ENCODE measurements at regions of chr12 and their contacts with region 1.

Region 1: DNA sequence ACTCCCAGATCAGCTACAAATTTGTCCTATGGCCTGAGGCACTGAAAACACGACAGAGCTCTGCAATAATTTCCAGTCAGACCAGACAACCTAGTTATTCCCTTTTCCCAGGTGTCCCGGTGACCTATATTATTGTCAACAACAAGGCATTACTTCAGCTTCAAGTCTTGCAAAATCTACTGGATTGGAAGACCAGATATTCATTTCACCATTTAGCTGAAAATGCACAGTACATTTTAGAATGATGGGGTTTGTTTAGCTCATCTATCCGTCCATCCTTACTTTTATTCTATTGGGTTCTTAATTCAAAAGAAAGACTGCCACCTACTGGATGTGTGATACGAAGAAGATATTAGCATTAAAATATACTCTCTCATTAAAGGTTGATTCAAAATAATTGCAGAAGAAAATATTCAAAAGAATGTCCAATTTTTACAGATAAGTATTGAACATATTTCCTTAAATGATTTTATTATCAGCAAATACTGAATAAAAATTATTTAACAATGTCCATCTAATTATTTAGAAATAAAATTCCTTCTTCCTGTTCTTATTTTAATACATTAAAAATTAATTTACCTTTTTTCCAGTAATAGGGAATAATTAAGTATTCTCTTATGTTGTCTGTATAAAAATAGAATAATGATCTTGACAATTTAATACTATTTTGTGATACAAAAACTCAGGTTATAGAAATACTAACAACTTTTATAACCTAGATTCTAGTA is 244.9 kb upstream of the LRIG3 start:
- DNase-seq: no peak
- ATAC-seq: no peak
- H3K4me3 Mint-ChIP-seq: no peak overlapping the region
- H3K27ac Mint-ChIP-seq: no peak overlapping the region
- H3K4me1 Mint-ChIP-seq: 0 out of 2 replicates have a peak, but pooled peaks cover 2% of the 10 kb centered on the region
- H3K27me3 Mint-ChIP-seq: no peaks in the 10 kb centered on the region
- CTCF ChIP-seq: 0 out of 2 replicates have a peak, but pooled peaks have one; percentile 16

Region 2: DNA sequence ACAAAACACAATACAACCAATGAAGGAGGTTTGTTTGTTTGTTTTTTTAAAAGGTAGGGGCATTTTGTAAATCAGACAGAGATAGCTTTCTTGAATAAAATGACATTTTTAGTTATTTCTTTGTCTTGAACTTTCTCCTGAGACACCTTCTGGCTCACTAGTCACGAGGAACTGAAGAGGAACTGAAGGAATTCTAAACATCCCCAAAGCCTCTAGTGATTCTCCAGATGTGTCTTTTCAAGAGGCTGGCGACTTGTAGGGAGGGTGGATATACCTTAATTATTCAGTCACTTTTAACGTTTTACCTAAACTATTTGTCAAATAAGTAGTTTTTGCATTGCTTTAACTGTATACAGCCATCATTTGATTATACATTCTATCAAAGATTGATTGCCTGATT is 33.7 kb before region 1 on chr12:
- CTCF ChIA-PET with region 1: no interaction called
- POLR2A ChIA-PET with region 1: no interaction called
- DNase-seq: no peak
- ATAC-seq: peak; percentile 68
- H3K4me3 Mint-ChIP-seq: no peak overlapping the region
- H3K27ac Mint-ChIP-seq: peak overlapping the region; percentile 9; the same call in 1 of the 2 replicates
- H3K4me1 Mint-ChIP-seq: peaks cover 15% of the 10 kb centered on the region
- H3K27me3 Mint-ChIP-seq: no peaks in the 10 kb centered on the region
- CTCF ChIP-seq: no peak

Region 3: GRCh38 chr12:59149997-59150642 is 15.0 kb before region 1 on chr12:
- CTCF ChIA-PET with region 1: interaction called, 24 read pairs
- POLR2A ChIA-PET with region 1: no interaction called
- DNase-seq: no peak
- ATAC-seq: peak; percentile 94
- H3K4me3 Mint-ChIP-seq: no peak overlapping the region
- H3K27ac Mint-ChIP-seq: no peak overlapping the region
- H3K4me1 Mint-ChIP-seq: peaks cover 9% of the 10 kb centered on the region
- H3K27me3 Mint-ChIP-seq: no peaks in the 10 kb centered on the region
- CTCF ChIP-seq: peak; percentile 73